ENCODE measurements at regions of chrX and their contacts with region 1.

Region 1: DNA sequence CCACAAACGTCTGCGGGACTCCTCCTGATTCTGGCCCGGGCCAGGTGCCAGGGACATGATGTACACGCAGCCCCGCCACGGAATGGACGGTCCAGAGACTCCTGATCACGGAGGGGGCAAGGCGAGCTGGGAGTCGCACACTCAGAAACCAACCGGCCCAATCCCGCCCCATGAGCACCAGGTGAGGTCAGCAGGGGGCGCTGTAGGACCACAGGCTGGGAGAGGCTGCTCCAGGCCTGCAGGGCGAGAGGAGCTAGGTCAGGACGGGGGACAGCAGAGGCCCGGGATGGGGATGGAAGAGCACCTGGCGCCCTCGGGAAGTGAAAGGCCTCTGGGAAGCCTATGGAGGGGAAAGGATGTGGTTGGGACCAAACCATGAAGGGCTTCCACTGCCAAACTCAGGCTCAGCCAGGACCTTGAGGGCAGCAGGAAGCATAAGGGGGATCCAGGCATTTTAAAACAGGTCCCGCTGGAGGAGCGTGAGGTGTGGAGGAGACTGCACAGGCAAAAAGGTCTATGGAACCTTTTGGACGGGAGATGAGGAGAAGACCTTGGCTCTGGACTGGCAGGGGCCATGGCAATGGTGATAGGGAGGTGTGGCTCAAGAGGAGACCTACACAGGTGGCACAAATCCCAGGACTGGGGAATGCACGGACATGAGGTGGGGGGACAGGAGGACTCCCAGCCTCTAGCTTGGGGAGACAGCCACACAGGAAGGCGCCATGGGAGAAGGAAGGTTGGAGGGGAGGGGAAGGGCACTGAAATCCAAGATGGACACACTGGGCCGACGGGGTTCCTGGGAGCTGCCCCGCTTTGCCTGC is 79.2 kb downstream of the MTMR1 start:
- DNase-seq: peak; percentile 81
- ATAC-seq: peak; percentile 79
- H3K4me3 Mint-ChIP-seq: no peak overlapping the region
- H3K27ac Mint-ChIP-seq: no peak overlapping the region
- H3K4me1 Mint-ChIP-seq: no peaks in the 10 kb centered on the region
- H3K27me3 Mint-ChIP-seq: no peaks in the 10 kb centered on the region
- CTCF ChIP-seq: peak; percentile 69

Region 2: DNA sequence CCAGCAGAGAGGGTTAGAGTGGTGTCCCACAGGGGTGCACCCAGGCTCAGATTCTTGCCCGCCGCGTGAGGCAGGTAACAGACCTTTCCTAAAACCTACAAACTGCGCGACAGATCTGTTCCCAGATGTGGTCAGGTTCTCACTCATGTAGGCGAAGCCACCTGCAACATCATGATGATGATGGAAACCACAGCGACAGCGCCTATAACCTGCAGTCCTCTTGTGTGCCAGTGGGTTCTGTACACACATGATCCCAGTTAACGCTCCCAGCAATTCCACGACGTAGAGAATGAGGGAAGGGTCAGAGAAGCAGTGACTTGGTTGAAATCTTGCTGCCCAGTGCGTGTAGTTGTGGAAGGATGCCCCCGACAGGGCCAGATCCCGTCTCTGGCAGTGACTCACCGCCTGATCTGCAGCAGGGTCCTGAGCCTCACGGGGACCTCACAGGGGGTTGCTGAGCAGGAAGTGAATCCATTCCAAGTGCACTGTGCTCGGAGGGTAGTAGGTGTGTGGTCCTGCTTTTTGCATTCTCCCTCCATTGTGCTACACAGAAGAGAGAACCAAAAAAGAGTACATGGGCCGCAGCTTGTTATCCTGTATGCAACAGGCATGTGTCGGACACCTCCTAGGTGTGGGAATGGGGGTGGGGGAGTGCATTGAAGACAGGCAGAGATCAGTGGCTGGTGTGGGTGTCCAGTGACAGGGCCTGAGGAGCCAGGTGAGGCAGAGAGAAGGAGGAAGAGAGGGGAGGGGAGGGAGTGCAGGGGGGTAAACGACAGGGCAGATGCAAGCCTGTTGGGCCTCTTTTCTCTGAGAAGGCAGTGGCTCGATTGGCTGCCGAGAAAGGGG is 12.6 kb before region 1 on chrX:
- CTCF ChIA-PET with region 1: no interaction called
- POLR2A ChIA-PET with region 1: no interaction called
- intact Hi-C with region 1: no loop called
- DNase-seq: no peak
- ATAC-seq: no peak
- H3K4me3 Mint-ChIP-seq: no peak overlapping the region
- H3K27ac Mint-ChIP-seq: no peak overlapping the region
- H3K4me1 Mint-ChIP-seq: peaks cover 7% of the 10 kb centered on the region
- H3K27me3 Mint-ChIP-seq: no peaks in the 10 kb centered on the region
- CTCF ChIP-seq: no peak

Region 3: GRCh38 chrX:150902434-150903109 is 130.2 kb after region 1 on chrX:
- CTCF ChIA-PET with region 1: interaction called, 3 read pairs
- POLR2A ChIA-PET with region 1: no interaction called
- intact Hi-C with region 1: loop called (anchors 10 kb)
- DNase-seq: no peak
- ATAC-seq: no peak
- H3K4me3 Mint-ChIP-seq: no peak overlapping the region
- H3K27ac Mint-ChIP-seq: no peak overlapping the region
- H3K4me1 Mint-ChIP-seq: no peaks in the 10 kb centered on the region
- H3K27me3 Mint-ChIP-seq: no peaks in the 10 kb centered on the region
- CTCF ChIP-seq: no peak

Region 4: DNA sequence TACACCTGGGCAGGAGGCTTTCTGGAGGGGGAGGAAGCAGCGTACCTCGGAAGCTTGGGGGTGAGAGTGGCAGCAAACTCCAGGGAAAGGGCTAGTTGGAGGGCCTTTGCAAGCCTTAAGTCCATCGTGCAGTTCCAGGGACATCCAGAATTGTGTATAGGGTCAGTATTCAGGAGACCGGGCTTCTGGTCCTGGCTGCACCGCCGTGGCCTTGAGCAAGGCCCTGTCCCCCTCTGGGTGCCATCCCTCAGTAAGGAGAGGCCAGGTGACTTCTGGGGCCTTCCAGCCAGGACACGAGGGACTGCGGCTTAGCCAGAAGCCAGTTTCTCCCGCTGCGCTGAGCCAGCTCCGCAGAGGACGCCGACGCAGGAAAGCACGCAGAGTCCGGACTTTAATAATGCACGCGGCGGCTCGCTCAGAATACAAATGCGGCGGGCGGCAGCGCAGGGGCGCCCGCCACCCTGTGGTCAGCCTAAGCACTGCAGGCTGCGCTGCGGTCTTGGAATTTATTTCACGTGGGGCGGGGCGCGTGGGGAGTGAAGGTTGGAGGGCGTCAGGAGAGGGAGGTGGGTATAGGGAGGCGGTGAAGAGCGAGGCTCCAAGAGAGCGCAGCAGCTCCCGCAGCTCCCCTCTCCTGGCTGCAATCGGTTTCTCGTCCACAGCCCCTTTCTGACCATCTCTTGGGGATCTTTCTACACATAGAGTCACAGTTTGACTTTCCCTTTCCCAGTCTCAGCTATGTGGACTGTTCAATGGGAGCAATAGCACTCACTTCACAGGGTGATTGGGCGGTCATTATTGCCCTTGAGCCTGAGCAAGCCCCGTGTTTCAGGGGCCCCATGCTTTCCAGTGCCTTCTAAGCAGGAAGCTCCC is 310.0 kb after region 1 on chrX:
- CTCF ChIA-PET with region 1: interaction called, 80 read pairs
- POLR2A ChIA-PET with region 1: interaction called, 3 read pairs
- intact Hi-C with region 1: loop called (anchors 5 kb)
- DNase-seq: peak; percentile 71
- ATAC-seq: peak; percentile 95
- H3K4me3 Mint-ChIP-seq: no peak overlapping the region
- H3K27ac Mint-ChIP-seq: no peak overlapping the region
- H3K4me1 Mint-ChIP-seq: peaks cover 2% of the 10 kb centered on the region
- H3K27me3 Mint-ChIP-seq: peaks cover 25% of the 10 kb centered on the region
- CTCF ChIP-seq: peak; percentile 82

Measured in activated CD8-positive, alpha-beta T cell treated with anti-CD3 and anti-CD28 coated beads for 36 hours (primary cell).